CD8-positive, alpha-beta memory T cell (primary cell): ENCODE measurements at regions of chr16 and their contacts with region 1.

Region 1: GRCh38 chr16:48365581-48366164 is 19.5 kb downstream of the SIAH1 start:
- DNase-seq: peak; percentile 59 to 81 (median 72)
- H3K4me3 ChIP-seq: peak overlapping the region; percentile 69
- H3K4me3 Mint-ChIP-seq: peak overlapping the region; percentile 85 to 96 (median 89)
- H3K27ac ChIP-seq: peak overlapping the region; percentile 90
- H3K27ac Mint-ChIP-seq: peak overlapping the region; percentile 41 to 95 (median 86)
- H3K4me1 ChIP-seq: peaks cover 22% of the 10 kb centered on the region
- H3K4me1 Mint-ChIP-seq: peaks cover 24 to 42% (median 40%) of the 10 kb centered on the region in 3 donors
- H3K27me3 ChIP-seq: no peaks in the 10 kb centered on the region
- H3K27me3 Mint-ChIP-seq: no peaks in the 10 kb centered on the region

Region 2: DNA sequence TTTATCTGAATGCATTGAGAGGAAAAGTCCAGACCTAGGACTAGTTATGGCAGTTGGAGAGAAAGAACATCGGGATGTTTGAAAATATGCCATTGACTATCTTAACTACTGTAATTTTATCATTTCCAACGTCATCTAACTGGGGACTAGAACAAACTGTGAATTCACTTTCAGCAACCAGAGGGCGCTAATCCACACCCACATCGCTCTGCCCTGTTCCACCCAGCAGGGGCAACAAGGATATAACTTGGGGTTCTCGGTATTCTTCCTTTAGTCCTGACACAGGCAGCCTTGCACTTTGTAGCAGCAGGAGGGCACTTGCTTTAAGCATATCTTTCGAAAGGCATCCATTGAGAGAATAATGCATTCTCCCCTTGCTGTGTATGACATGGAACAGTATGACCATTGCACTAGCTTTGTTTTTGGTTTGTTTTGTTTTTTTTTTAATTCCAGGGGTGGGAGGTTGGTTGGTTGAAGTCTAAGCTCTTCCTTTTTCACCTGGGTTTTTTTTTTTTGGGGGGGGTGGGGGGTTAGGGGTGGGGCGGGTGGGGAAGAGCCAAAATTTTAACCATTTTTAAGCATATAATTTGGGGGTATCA is 12.0 kb before region 1 on chr16:
- CTCF ChIA-PET with region 1: interaction called, 25 read pairs
- POLR2A ChIA-PET with region 1: no interaction called
- DNase-seq: peak; percentile 44 to 78 (median 68)
- H3K4me3 ChIP-seq: no peak overlapping the region
- H3K4me3 Mint-ChIP-seq: no peak overlapping the region
- H3K27ac ChIP-seq: no peak overlapping the region
- H3K27ac Mint-ChIP-seq: peak overlapping the region in 7 of 8 donors; percentile 45 to 87 (median 66)
- H3K4me1 ChIP-seq: peaks cover 6% of the 10 kb centered on the region
- H3K4me1 Mint-ChIP-seq: peaks cover 5 to 11% (median 9%) of the 10 kb centered on the region in 3 donors
- H3K27me3 ChIP-seq: no peaks in the 10 kb centered on the region
- H3K27me3 Mint-ChIP-seq: no peaks in the 10 kb centered on the region

Region 3: GRCh38 chr16:48385272-48386150 is 19.8 kb after region 1 on chr16 and contains the start of gene SIAH1:
- CTCF ChIA-PET with region 1: interaction called, 4 read pairs
- POLR2A ChIA-PET with region 1: interaction called, 29 read pairs
- DNase-seq: peak; percentile 85 to 90 (median 87)
- H3K4me3 ChIP-seq: peak within 1 kb of the TSS; percentile 70
- H3K4me3 Mint-ChIP-seq: peak within 1 kb of the TSS; percentile 89 to 99 (median 92)
- H3K27ac ChIP-seq: peak within 1 kb of the TSS; percentile 53
- H3K27ac Mint-ChIP-seq: peak within 1 kb of the TSS; percentile 80 to 97 (median 92)
- H3K4me1 ChIP-seq: peaks cover 15% of the 10 kb centered on the region
- H3K4me1 Mint-ChIP-seq: peaks cover 13 to 29% (median 14%) of the 10 kb centered on the region in 3 donors
- H3K27me3 ChIP-seq: no peaks in the 10 kb centered on the region
- H3K27me3 Mint-ChIP-seq: peaks cover 0 to 3% of the 10 kb centered on the region in 2 donors
- total RNA-seq, gene SIAH1: 11.6 to 13.3 TPM

Region 4: DNA sequence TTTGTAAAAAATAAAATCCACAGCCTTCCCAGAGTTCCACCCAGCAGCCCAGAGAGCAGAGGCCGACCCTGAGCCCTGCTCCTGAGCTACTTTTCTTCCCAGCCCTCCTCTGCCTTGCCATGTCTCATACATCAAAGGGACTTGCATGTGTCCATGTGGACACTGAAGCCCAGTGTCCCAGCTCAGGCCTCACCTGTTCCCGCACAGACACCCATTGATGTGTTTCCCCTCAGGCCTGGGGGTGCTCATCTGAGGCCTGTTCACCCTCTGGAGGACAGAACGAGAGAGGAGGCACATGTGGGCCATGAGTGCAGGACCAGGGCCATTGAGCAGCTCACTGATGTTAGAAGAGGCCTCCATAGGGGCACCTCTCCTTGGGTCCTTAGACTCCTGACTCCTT is 33.1 kb after region 1 on chr16:
- CTCF ChIA-PET with region 1: no interaction called
- POLR2A ChIA-PET with region 1: no interaction called
- DNase-seq: no peak
- H3K4me3 ChIP-seq: no peak overlapping the region
- H3K4me3 Mint-ChIP-seq: no peak overlapping the region
- H3K27ac ChIP-seq: no peak overlapping the region
- H3K27ac Mint-ChIP-seq: no peak overlapping the region
- H3K4me1 ChIP-seq: no peaks in the 10 kb centered on the region
- H3K4me1 Mint-ChIP-seq: peaks cover 5 to 7% (median 6%) of the 10 kb centered on the region in 3 donors
- H3K27me3 ChIP-seq: no peaks in the 10 kb centered on the region
- H3K27me3 Mint-ChIP-seq: no peaks in the 10 kb centered on the region

Region 5: DNA sequence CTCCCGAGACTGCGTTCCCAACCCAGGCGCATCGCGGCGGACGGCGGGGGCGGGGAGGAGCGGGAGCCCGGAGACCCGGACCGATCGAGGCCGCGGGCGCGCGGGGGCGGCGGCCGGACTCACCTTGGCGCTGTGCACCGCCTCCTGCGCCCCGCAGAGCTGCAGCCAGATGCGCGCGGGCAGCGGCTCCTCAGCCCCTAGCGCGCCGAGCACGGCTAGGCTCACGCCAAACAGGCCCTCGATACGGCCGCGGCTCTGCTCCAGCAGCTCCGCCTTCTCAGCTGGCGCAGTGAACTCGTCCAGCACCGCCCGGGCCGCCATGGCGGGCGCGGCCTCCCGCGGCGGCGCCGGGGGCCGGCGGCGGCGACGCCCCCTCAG is 244.0 kb after region 1 on chr16:
- CTCF ChIA-PET with region 1: interaction called, 4 read pairs
- POLR2A ChIA-PET with region 1: interaction called, 11 read pairs
- DNase-seq: no peak
- H3K4me3 ChIP-seq: peak overlapping the region; percentile 68
- H3K4me3 Mint-ChIP-seq: no peak overlapping the region
- H3K27ac ChIP-seq: peak overlapping the region; percentile 97
- H3K27ac Mint-ChIP-seq: peak overlapping the region; percentile 89 to 98 (median 94)
- H3K4me1 ChIP-seq: peaks cover 83% of the 10 kb centered on the region
- H3K4me1 Mint-ChIP-seq: peaks cover 41 to 45% (median 41%) of the 10 kb centered on the region in 3 donors
- H3K27me3 ChIP-seq: no peaks in the 10 kb centered on the region
- H3K27me3 Mint-ChIP-seq: peaks cover 0 to 6% of the 10 kb centered on the region in 2 donors